CD4-positive, alpha-beta T cell (primary cell): ENCODE measurements at regions of chr7 and their contacts with region 1.

Region 1: DNA sequence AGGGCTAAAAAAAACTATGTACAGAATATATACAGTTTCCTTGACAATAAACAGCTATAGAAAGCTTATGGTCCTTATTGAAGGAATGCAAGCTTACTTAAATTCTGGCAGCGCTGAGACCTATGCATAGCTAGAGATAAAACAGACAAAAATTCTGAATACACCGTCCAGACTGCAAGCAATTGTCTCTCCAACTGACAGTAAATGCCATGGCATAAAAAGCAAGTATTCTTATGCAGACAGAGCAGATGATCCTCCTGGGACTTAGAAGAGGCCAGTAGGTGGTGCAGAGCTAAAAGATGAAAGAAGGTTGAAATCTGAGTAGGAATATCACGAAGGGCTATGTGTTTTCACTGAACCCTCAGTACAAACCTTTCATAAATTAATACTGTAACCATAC is 157.0 kb upstream of the CACNA2D1 start:
- DNase-seq: no peak
- ATAC-seq: no peak
- H3K4me3 ChIP-seq: no peak overlapping the region
- H3K4me3 Mint-ChIP-seq: no peak overlapping the region
- H3K27ac ChIP-seq: no peak overlapping the region
- H3K27ac Mint-ChIP-seq: no peak overlapping the region
- H3K4me1 ChIP-seq: no peaks in the 10 kb centered on the region
- H3K4me1 Mint-ChIP-seq: no peaks in the 10 kb centered on the region
- H3K27me3 ChIP-seq: no peaks in the 10 kb centered on the region
- H3K27me3 Mint-ChIP-seq: no peaks in the 10 kb centered on the region
- CTCF ChIP-seq: no peak

Region 2: DNA sequence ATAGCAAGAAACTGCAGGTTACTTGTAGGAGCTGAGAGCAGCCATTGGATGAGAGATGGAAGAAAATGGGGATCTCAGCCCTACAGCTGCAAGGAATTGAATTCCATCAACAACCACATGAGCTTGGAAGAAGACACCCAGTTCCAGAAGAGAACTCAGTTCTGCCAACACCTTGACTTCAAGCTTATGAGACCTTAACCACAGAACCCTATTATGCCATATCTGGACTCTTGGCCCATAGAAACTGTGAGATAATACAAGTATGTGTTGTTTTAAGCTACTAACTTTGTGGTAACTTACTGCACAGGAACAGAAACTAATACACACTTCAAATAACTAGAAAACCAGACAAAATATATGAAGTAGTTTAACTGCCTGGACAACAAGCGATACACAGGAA is 55.4 kb after region 1 on chr7:
- CTCF ChIA-PET with region 1: no interaction called
- POLR2A ChIA-PET with region 1: no interaction called
- intact Hi-C with region 1: loop called in 1 of 2 experiments (anchors 10 kb)
- DNase-seq: no peak
- ATAC-seq: no peak
- H3K4me3 ChIP-seq: no peak overlapping the region
- H3K4me3 Mint-ChIP-seq: no peak overlapping the region
- H3K27ac ChIP-seq: no peak overlapping the region
- H3K27ac Mint-ChIP-seq: no peak overlapping the region
- H3K4me1 ChIP-seq: no peaks in the 10 kb centered on the region
- H3K4me1 Mint-ChIP-seq: no peaks in the 10 kb centered on the region
- H3K27me3 ChIP-seq: no peaks in the 10 kb centered on the region
- H3K27me3 Mint-ChIP-seq: no peaks in the 10 kb centered on the region
- CTCF ChIP-seq: no peak